WTC11 (cell line): ENCODE measurements at regions of chr9 and their contacts with region 1.

Region 1: DNA sequence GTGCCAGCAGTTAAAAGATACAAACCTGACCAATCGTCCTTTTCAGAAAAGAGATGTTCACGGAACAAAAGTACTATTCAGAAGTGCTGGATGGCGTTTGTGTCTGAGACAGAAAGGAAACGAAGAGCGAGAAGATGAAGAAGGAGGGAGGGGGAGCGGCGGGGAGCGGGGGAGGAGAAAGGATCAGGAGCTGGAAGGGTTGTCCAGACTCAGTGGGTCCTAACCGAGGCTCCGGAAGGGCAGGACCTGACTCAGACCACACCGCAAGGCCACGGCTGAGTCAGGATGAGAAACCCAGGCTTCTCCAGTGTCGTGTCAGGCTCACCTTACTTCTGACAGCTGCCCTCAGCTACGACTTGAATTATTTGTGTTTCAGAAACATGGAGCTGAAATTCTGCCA is 46.2 kb downstream of the PAX5 start:
- DNase-seq: no peak
- ATAC-seq: no peak
- H3K4me3 Mint-ChIP-seq: peak overlapping the region; percentile 72
- H3K27ac Mint-ChIP-seq: no peak overlapping the region
- H3K4me1 Mint-ChIP-seq: peaks cover 28% of the 10 kb centered on the region
- H3K27me3 Mint-ChIP-seq: peaks cover 94% of the 10 kb centered on the region
- CTCF ChIP-seq: no peak

Region 2: DNA sequence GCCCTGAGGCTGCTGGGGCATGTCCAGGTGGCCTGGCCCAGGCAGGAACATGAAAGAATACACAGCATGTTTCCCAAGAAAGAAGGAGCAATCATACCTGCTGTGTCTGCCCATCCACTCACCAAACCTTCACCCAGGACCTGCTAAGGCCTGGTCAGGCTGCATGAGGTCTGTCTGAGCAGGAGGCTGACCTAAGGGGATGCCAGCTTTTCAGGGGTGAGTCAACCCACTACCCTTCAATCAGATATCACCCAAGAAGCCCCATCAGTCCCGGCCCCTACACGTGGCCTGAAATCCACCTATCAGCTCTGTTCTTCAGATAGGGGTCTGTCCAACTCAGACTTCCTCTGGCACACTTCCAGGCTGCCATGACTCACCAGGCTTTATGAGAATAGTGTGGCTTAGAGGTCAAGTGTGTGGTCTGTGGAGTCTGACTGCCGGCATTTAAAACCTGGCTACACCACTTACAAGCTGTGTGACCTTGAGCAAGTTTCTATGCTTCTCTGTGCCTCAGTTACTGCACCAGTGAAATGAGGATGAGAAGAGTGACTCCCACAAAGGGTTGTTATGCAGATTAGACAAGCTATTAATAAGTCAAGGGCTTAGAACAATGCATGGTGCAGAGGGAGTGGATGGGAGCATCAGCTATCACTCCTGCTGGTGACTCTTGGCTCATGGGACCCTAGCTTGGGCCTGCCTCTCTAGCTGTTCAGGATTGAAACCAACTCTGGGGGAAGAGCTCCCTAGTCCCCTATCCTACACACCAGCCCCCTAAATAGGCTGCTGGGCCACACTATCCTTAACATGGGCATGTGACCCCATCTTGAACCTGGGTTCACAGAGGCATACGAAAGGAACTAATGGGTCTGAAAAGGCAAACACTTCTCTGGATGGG is 84.1 kb before region 1 on chr9:
- CTCF ChIA-PET with region 1: interaction called, 10 read pairs
- POLR2A ChIA-PET with region 1: no interaction called
- DNase-seq: no peak
- ATAC-seq: no peak
- H3K4me3 Mint-ChIP-seq: no peak overlapping the region
- H3K27ac Mint-ChIP-seq: no peak overlapping the region
- H3K4me1 Mint-ChIP-seq: peaks cover 6% of the 10 kb centered on the region
- H3K27me3 Mint-ChIP-seq: peaks cover 4% of the 10 kb centered on the region; the same call in 1 of the 2 replicates
- CTCF ChIP-seq: no peak

Region 3: DNA sequence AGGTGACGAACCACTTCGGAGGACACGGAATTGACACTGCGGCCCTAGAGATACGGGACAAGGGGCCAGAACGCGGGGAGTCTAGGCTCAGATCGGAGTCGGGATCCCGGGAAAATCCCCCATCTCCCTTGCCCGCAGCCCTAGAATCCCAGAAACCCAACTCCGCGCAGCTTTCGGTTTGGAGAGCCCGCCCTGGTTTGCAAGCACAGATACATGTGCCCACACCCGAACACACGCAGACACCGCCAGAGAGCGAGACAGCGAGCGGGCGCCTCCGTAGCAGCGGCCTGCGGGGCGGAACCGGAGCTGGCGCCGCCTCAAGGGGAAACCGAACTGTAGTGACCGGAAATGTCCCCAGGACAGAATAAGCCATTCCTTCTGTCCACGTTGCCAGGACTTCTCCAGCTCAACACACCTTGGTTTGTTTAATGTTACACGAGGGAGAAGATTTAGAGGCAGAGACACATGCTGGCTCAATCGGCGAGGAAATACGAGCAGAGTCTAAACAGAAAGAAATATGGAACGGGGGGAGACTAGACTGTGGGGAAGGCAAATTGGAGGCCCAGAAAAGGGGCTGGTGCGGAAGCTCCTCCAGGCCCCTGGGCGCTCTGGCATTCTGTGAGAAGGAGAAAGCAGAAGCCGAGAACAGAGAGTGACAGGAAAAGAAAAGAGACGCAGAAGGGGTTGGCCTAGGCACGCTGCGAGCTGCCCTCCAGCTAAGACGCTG is 49.0 kb after region 1 on chr9:
- CTCF ChIA-PET with region 1: no interaction called
- POLR2A ChIA-PET with region 1: no interaction called
- DNase-seq: peak; percentile 59
- ATAC-seq: peak; percentile 22
- H3K4me3 Mint-ChIP-seq: peak overlapping the region; percentile 74
- H3K27ac Mint-ChIP-seq: no peak overlapping the region
- H3K4me1 Mint-ChIP-seq: peaks cover 50% of the 10 kb centered on the region
- H3K27me3 Mint-ChIP-seq: peaks cover 98% of the 10 kb centered on the region
- CTCF ChIP-seq: no peak

Region 4: DNA sequence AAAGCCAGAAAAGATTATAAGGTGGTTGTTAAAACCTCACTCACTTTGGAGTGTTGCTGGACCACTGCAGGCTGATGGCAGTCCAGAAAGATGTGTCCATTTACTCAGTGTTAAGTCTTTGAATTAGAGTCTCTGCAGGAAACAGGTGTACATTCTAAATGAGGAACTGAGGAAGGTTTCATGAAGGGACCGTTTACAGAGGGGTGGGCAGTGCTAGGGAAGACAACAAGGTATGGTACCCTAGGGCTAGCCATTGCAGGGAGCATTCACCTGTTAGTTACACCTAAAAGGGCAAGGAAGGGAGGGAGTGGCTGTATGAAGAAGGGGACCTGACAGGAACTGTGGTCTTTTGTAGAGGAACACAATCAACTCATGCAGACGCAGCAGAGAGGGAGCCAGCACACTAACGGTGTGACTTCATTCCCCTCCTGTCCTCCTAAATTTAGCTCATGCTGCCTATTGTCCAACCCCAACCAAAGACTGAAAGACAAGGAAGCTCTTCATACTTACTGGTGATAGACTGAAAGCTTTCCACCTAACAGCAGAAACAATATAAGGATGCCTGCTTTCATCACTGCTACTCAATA is 78.3 kb after region 1 on chr9:
- CTCF ChIA-PET with region 1: no interaction called
- POLR2A ChIA-PET with region 1: no interaction called
- DNase-seq: no peak
- ATAC-seq: no peak
- H3K4me3 Mint-ChIP-seq: no peak overlapping the region
- H3K27ac Mint-ChIP-seq: no peak overlapping the region
- H3K4me1 Mint-ChIP-seq: no peaks in the 10 kb centered on the region
- H3K27me3 Mint-ChIP-seq: peaks cover 14% of the 10 kb centered on the region
- CTCF ChIP-seq: no peak